Heart left ventricle (tissue), 16 donors: ENCODE measurements at regions of chr4 and their contacts with region 1.

Region 1: DNA sequence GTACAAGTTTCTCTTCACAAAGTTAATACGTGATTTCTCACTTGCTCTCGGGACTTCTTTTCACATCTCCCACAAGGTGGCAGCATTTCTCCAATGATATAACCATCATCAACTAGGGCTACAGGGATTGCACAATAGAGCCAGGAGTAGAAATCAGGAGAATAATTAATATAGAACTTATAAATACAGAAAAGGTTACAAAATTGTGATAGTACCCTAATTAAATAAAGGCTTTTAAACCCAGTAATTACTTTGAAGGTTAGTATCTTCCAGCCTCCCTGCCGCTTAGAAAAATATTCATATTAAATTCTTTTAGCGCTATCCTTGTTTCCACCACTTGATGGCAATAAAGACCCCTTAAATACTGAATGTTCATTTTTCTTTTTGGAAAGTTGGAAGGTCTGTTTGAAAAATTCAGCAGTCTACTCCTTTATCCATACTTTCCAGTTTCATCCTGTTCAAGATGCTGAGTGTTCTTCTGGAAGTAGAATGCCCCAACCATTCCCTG is 65.8 kb downstream of the RASGEF1B start:
- DNase-seq: peak in 2 of 5 donors; percentile 32 to 49
- ATAC-seq: peak; percentile 57 to 86 (median 72)
- H3K4me3 ChIP-seq: peak overlapping the region in 5 of 12 donors; percentile 14 to 36 (median 27)
- H3K27ac ChIP-seq: no peak overlapping the region
- H3K4me1 ChIP-seq: peaks cover 0 to 10% (median 0%) of the 10 kb centered on the region in 12 donors
- H3K27me3 ChIP-seq: peaks cover 0 to 3% (median 0%) of the 10 kb centered on the region in 9 donors
- CTCF ChIP-seq: peak; percentile 60 to 88 (median 80)
- POLR2A ChIP-seq: no peak

Region 2: DNA sequence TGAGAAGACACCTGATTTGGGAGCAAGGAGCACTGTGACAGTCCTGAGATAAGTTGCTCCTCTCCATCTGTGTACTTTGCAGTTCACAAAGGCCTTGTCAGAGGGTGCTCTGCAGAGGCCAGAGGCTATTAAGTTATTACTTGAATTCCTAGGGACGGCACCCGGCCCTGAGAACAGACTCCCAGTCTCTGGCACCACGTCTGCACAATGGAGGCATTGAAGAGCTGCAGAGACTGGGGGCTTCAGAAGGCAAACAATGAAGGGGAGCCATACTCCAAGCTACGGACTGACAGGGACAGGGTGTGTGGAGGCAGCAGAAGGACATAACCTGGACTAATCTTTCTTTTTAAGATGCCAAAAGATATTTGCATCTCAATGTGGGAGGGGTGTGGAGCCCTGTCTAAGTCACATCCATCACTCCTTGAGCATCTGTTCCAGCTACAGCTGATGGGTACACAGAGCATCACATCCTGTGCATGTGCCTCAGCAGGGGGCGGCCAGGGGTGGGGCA is 54.3 kb after region 1 on chr4:
- intact Hi-C with region 1: loop called in 3 of 10 experiments (anchors 5 to 10 kb)
- DNase-seq: no peak
- ATAC-seq: no peak
- H3K4me3 ChIP-seq: no peak overlapping the region
- H3K27ac ChIP-seq: no peak overlapping the region
- H3K4me1 ChIP-seq: peaks cover 0 to 9% (median 0%) of the 10 kb centered on the region in 12 donors
- H3K27me3 ChIP-seq: no peaks in the 10 kb centered on the region
- CTCF ChIP-seq: no peak
- POLR2A ChIP-seq: no peak

Region 3: GRCh38 chr4:81505004-81505598 is 99.2 kb after region 1 on chr4:
- intact Hi-C with region 1: no loop called
- DNase-seq: peak; percentile 59 to 76 (median 74)
- ATAC-seq: peak; percentile 73 to 89 (median 85)
- H3K4me3 ChIP-seq: peak overlapping the region in 2 of 12 donors; percentile 24 to 27
- H3K27ac ChIP-seq: peak overlapping the region in 11 of 12 donors; percentile 11 to 90 (median 47)
- H3K4me1 ChIP-seq: peaks cover 0 to 52% (median 6%) of the 10 kb centered on the region in 12 donors
- H3K27me3 ChIP-seq: no peaks in the 10 kb centered on the region
- CTCF ChIP-seq: no peak
- POLR2A ChIP-seq: no peak

Region 4: GRCh38 chr4:81844717-81845116 is 438.8 kb after region 1 on chr4:
- intact Hi-C with region 1: loop called (anchors 2 to 5 kb)
- DNase-seq: peak in 4 of 5 donors; percentile 49 to 67 (median 54)
- ATAC-seq: peak; percentile 80 to 96 (median 88)
- H3K4me3 ChIP-seq: no peak overlapping the region
- H3K27ac ChIP-seq: no peak overlapping the region
- H3K4me1 ChIP-seq: peaks cover 0 to 10% (median 3%) of the 10 kb centered on the region in 12 donors
- H3K27me3 ChIP-seq: no peaks in the 10 kb centered on the region
- CTCF ChIP-seq: peak; percentile 65 to 91 (median 78)
- POLR2A ChIP-seq: no peak

Region 5: GRCh38 chr4:81997313-81997712 is 591.4 kb after region 1 on chr4:
- intact Hi-C with region 1: no loop called
- DNase-seq: no peak
- ATAC-seq: no peak
- H3K4me3 ChIP-seq: no peak overlapping the region
- H3K27ac ChIP-seq: no peak overlapping the region
- H3K4me1 ChIP-seq: no peaks in the 10 kb centered on the region
- H3K27me3 ChIP-seq: no peaks in the 10 kb centered on the region
- CTCF ChIP-seq: no peak
- POLR2A ChIP-seq: no peak

Region 6: DNA sequence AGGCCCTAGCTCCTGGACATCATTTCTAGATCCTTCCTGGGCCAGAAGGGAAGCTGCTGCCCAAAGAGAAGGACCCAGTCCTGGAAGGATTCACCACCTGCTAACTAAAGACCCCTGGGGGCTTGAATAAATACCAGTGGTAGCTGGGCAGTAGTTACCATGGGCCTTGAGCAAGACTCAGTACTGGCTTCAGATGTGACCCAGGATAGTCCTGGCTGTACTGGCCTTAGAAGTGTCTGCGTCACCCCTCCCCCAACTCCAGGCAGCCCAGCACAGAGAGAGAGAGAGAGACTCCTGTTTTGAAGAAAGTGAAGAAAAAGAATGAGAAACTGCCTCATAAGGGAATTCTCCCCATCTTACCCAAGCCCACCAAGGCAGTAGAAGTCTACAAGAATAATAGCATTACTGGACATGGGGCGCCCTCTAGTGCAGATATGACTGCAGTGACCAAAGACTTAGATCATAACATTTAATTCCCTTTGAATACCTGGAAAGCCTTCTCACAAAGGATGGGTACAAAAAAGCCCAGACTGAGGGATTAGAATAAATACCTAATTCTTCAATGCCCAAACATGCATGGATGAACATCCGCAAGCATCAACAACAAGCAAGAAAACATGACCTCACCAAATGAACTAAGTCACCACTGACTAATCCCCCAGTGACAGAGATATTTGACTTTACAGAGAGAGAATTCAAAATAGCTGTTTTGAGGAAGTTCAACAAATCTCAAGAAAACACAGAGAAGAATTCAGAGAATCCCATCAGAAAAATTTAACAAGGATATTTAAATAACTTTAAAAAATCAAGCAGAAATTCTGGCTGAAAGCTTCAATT is 796.1 kb after region 1 on chr4:
- intact Hi-C with region 1: loop called (anchors 2 to 10 kb)
- DNase-seq: peak in 2 of 5 donors; percentile 10 to 40
- ATAC-seq: peak in 1 of 4 donors; percentile 51
- H3K4me3 ChIP-seq: no peak overlapping the region
- H3K27ac ChIP-seq: no peak overlapping the region
- H3K4me1 ChIP-seq: no peaks in the 10 kb centered on the region
- H3K27me3 ChIP-seq: no peaks in the 10 kb centered on the region
- CTCF ChIP-seq: peak; percentile 19 to 60 (median 52)
- POLR2A ChIP-seq: no peak

Region 7: DNA sequence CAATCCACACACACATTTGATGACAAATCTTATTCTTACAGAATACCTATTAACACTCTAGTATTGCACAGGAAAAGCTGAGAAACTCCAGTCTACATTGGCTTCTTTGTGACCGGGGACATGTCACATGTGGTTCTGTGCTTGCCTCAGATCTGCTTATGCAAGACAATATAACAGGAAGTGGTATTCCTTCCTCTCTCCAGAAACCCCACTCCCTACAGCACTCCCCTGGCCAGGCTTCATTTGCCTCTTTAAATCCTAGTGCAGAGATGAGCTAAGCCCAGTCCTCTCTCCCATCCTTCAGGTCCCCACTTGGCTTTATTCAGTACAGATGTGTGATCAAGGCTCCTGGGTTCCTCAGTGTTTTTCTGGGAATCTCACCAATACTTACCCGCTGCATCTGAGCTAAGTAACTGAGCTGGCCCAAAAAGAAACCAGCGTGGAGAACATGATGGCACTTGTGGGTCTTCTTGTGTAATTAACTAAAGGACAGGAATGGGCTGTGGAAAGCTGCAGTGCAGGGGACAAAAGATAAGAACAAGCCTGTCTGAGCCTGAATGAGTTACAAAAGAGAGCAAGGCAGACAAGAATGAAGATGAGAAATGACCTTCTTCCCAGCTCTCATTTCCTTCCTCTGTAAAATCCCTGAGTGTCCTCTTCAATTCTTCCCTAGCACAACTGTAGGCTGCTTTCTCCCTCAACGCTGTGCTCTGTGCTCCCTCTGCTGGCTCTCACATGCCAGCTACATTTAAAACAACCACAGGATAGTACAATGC is 862.3 kb after region 1 on chr4:
- intact Hi-C with region 1: loop called (anchors 1 to 5 kb)
- DNase-seq: peak; percentile 37 to 69 (median 40)
- ATAC-seq: peak; percentile 90 to 98 (median 96)
- H3K4me3 ChIP-seq: peak overlapping the region in 2 of 12 donors; percentile 15 to 25
- H3K27ac ChIP-seq: peak overlapping the region in 1 of 12 donors; percentile 75
- H3K4me1 ChIP-seq: peaks cover 0 to 8% (median 0%) of the 10 kb centered on the region in 12 donors
- H3K27me3 ChIP-seq: peaks cover 0 to 3% (median 0%) of the 10 kb centered on the region in 9 donors
- CTCF ChIP-seq: peak; percentile 50 to 78 (median 70)
- POLR2A ChIP-seq: no peak